PC-9 (cell line): ENCODE measurements at regions of chr2 and their contacts with region 1.

Region 1: GRCh38 chr2:70301344-70302194 is at the start of gene FAM136A:
- DNase-seq: peak; percentile 58 to 89
- H3K4me3 ChIP-seq: peak within 1 kb of the TSS; percentile 81
- H3K27ac ChIP-seq: peak within 1 kb of the TSS; percentile 70
- H3K4me1 ChIP-seq: no peaks in the 10 kb centered on the region; the same call in 1 of the 2 replicates
- H3K27me3 ChIP-seq: no peaks in the 10 kb centered on the region
- CTCF ChIP-seq: peak; percentile 90
- total RNA-seq, gene FAM136A: 38.5 and 39.3 TPM in 2 replicates

Region 2: DNA sequence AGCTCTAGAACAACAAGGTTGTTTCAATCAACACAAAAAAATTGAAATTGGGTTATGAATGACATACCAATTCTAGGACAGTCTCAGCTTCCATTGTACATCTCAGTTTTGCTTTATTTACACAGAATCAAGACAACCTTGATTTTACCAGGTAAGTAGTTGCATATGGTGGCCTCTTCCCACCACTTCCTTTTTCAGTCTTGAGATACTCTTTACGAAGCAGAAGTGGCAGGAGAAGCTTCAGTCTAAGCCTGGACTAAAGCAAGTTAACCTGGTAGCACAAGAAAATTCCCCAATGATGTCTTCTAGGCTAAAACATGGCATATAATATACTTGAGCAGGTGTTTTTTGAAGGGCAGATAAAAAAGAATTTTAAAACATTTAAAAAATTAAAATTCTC is 11.0 kb after region 1 on chr2:
- CTCF ChIA-PET with region 1: no interaction called
- POLR2A ChIA-PET with region 1: no interaction called
- intact Hi-C with region 1: no loop called
- DNase-seq: no peak
- H3K4me3 ChIP-seq: no peak overlapping the region
- H3K27ac ChIP-seq: no peak overlapping the region
- H3K4me1 ChIP-seq: no peaks in the 10 kb centered on the region
- H3K27me3 ChIP-seq: no peaks in the 10 kb centered on the region
- CTCF ChIP-seq: no peak

Region 3: GRCh38 chr2:70367722-70368323 is 66.3 kb after region 1 on chr2:
- CTCF ChIA-PET with region 1: no interaction called
- POLR2A ChIA-PET with region 1: no interaction called
- intact Hi-C with region 1: no loop called
- DNase-seq: peak in 1 of 2 experiments; percentile 56
- H3K4me3 ChIP-seq: no peak overlapping the region
- H3K27ac ChIP-seq: no peak overlapping the region
- H3K4me1 ChIP-seq: peaks cover 19% of the 10 kb centered on the region
- H3K27me3 ChIP-seq: no peaks in the 10 kb centered on the region
- CTCF ChIP-seq: no peak

Region 4: DNA sequence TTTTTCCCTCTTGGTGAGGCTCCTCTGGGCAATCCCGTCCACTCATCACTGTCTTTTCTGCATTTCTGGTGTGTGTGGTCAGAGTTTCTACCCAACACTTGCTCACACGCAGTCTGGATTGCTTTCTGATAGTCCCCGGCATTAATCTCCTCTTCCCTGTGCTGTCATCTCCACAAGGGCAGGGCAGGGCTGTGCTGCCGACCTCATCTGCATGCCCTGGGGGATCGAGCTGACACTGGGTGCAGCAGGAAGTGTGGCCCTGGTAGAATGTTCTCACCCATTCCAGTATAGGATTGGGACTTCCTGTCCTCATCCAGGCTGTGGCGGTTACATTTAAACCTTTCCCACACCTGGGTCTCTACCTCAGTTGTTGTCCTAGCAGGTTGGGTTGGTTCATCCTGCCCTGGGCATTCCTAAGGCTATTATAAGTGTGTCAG is 80.3 kb after region 1 on chr2:
- CTCF ChIA-PET with region 1: no interaction called
- POLR2A ChIA-PET with region 1: no interaction called
- intact Hi-C with region 1: loop called (anchors 2 kb)
- DNase-seq: peak; percentile 85 to 97
- H3K4me3 ChIP-seq: peak overlapping the region; percentile 34; the same call in 1 of the 2 replicates
- H3K27ac ChIP-seq: peak overlapping the region; percentile 98
- H3K4me1 ChIP-seq: peaks cover 35% of the 10 kb centered on the region
- H3K27me3 ChIP-seq: no peaks in the 10 kb centered on the region
- CTCF ChIP-seq: no peak

Region 5: DNA sequence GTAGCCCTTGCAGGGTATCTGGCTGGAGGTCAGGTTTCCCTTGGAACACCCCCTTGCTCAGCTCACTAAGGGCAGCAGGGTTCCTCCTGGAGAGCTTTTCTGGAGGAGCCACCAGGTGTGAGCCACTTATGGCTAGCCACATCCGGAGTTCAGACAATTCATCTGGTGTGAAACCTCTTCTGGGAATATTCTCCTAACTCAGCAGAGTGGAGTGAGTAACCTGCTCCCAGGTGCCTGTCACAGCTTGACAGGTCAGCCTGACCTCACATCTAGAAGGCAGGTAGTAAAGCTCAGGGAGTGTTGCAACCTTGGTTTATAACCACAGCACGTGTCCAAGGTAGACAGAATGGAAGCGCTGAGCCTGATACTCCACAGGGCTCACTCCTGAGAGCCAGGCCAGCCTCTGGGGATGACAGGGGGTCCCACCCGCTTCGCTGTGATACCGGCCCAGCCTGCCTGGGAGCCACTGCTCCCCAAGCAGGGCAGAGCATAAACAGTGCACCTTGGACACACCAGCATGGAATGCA is 314.7 kb after region 1 on chr2:
- CTCF ChIA-PET with region 1: interaction called, 10 read pairs
- POLR2A ChIA-PET with region 1: interaction called, 9 read pairs
- intact Hi-C with region 1: loop called (anchors 1 kb)
- DNase-seq: peak; percentile 67 to 96
- H3K4me3 ChIP-seq: no peak overlapping the region
- H3K27ac ChIP-seq: peak overlapping the region; percentile 33; the same call in 1 of the 2 replicates
- H3K4me1 ChIP-seq: peaks cover 24% of the 10 kb centered on the region
- H3K27me3 ChIP-seq: no peaks in the 10 kb centered on the region
- CTCF ChIP-seq: no peak

Region 6: DNA sequence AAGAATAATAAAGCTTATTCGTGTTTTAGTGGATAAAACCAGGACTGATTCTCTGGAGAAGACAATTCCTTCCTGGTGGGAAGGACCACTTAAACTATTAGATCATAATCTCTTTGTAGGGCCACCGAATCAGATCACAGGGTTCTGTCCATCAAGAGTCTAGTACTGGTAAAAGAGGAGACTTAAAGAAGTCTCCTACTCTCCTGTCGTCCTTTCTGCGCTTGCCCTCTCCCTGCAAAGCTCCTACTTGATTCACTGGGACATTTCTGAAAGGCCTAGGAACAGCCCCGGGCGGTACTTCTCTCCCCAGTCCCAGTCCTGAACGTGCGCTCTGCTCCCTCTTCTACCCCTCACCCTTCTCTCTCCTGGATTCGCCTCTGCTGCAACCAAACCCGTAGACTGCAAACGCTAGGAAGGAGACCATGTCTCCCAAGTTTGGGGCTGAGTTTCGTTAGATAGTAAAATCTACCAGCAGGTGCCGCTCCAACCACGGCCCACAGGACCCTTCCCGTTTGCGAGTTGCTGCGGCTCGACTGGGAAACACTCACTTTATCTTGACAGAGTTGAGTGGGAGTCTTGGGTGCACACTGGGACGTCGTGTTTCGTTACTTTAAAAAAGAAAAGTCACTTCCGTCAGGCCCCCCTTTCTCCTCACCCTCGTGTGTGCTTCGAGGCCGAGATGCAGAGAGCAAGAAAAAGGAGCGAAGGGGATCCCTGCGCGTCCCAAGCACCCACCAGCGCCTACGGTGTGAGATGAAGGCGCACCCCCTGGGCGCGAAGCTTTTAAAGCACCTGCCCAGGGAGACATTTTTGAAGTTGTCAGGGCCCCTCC is 488.0 kb after region 1 on chr2:
- CTCF ChIA-PET with region 1: interaction called, 19 read pairs
- POLR2A ChIA-PET with region 1: no interaction called
- intact Hi-C with region 1: loop called (anchors 1 kb)
- DNase-seq: peak in 1 of 2 experiments; percentile 44
- H3K4me3 ChIP-seq: no peak overlapping the region
- H3K27ac ChIP-seq: no peak overlapping the region
- H3K4me1 ChIP-seq: no peaks in the 10 kb centered on the region
- H3K27me3 ChIP-seq: peaks cover 32% of the 10 kb centered on the region
- CTCF ChIP-seq: peak; percentile 58

Region 7: DNA sequence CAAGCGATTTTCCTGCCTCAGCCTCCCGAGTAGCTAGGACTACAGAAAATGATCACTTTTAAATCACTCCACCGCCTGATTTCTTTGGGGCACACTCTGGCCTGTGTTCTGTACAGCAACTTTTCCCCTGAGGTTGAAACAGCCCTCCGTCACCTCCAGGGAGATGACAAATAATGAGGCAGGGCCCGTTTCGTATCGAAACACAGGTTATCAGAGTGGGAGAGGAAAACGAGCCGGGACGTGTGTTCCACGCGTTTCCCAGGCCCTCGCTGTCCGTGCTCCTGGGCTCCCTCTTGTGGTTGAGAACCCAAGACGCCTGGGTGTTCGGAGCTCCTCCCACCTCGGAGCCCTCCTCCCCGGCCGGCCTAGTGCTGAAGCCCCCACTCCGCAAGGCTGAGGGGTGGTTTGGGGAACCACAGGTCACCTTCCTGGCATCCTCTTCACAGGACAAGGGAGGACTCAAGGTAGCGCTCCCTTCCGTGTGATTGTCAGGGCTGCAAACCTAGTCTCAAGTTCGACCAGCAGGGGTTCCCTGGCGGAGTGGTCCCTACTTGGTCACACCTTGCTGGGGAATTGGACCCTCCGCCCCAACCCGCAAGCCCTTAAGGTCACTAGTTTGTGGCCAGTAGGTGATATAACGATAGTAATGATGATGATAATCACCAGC is 646.9 kb after region 1 on chr2:
- CTCF ChIA-PET with region 1: interaction called, 3 read pairs
- POLR2A ChIA-PET with region 1: no interaction called
- intact Hi-C with region 1: loop called (anchors 5 kb)
- DNase-seq: peak in 1 of 2 experiments; percentile 70
- H3K4me3 ChIP-seq: peak overlapping the region; percentile 45; the same call in 1 of the 2 replicates
- H3K27ac ChIP-seq: no peak overlapping the region
- H3K4me1 ChIP-seq: peaks cover 7% of the 10 kb centered on the region; the same call in 1 of the 2 replicates
- H3K27me3 ChIP-seq: no peaks in the 10 kb centered on the region
- CTCF ChIP-seq: peak; percentile 86